ENCODE measurements at regions of chr19 and their contacts with region 1.

Region 1: GRCh38 chr19:38658462-38659306 is 11.2 kb downstream of the ACTN4 start:
- DNase-seq: peak in 1 of 3 donors; percentile 63
- ATAC-seq: peak; percentile 75 to 83 (median 82)
- H3K4me3 ChIP-seq: peak overlapping the region in 2 of 3 donors; percentile 2 to 7
- H3K27ac ChIP-seq: peak overlapping the region; percentile 59 to 94 (median 63)
- H3K4me1 ChIP-seq: peaks cover 0 to 94% (median 42%) of the 10 kb centered on the region in 4 donors
- H3K27me3 ChIP-seq: no peaks in the 10 kb centered on the region
- CTCF ChIP-seq: no peak
- POLR2A ChIP-seq: peak; percentile 29

Region 2: DNA sequence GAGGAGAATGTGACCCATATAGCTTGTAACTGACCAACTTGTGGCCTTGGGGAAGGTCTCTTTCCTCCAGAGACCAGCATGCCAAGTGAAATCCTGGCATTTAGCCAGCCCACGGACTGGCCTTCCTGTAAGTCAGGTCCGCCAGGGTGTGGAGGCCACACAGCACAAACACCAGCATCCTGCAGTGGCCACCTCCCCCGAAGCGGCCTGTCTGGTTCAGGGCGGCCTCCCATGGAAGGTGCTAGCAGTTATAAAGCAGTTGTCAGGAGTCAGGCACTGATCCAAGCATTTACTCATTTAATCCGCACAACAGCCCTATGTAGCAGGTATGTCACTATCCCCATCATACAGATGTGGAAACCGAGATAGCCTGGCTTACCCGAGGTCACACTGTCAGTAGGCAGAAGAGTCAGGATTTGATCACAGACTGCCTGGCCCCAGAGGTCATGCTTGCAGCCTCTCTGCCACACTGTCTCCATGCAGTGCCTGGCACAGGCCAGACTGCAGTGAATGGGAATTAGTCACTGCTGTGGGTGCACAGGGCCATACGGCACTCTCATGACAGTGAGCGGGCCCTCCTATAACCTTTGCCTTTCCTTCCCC is 48.9 kb after region 1 on chr19:
- intact Hi-C with region 1: loop called in 1 of 2 experiments (anchors 10 kb)
- DNase-seq: peak in 2 of 3 donors; percentile 79 to 86
- ATAC-seq: peak; percentile 31 to 60 (median 52)
- H3K4me3 ChIP-seq: no peak overlapping the region
- H3K27ac ChIP-seq: peak overlapping the region; percentile 0 to 63 (median 43)
- H3K4me1 ChIP-seq: peaks cover 0 to 45% (median 20%) of the 10 kb centered on the region in 4 donors
- H3K27me3 ChIP-seq: no peaks in the 10 kb centered on the region
- CTCF ChIP-seq: no peak
- POLR2A ChIP-seq: no peak

Region 3: GRCh38 chr19:38952395-38953165 is 293.9 kb after region 1 on chr19:
- intact Hi-C with region 1: no loop called
- DNase-seq: peak in 1 of 3 donors; percentile 5
- ATAC-seq: peak; percentile 61 to 84 (median 74)
- H3K4me3 ChIP-seq: no peak overlapping the region
- H3K27ac ChIP-seq: no peak overlapping the region
- H3K4me1 ChIP-seq: peaks cover 0 to 19% (median 7%) of the 10 kb centered on the region in 4 donors
- H3K27me3 ChIP-seq: no peaks in the 10 kb centered on the region
- CTCF ChIP-seq: peak; percentile 34 to 60 (median 52)
- POLR2A ChIP-seq: no peak

Measured in right lobe of liver (tissue), 6 donors.